Activated CD4-positive, alpha-beta memory T cell treated with anti-CD3 and anti-CD28 coated beads for 36 hours (primary cell): ENCODE measurements at regions of chr9 and their contacts with region 1.

Region 1: DNA sequence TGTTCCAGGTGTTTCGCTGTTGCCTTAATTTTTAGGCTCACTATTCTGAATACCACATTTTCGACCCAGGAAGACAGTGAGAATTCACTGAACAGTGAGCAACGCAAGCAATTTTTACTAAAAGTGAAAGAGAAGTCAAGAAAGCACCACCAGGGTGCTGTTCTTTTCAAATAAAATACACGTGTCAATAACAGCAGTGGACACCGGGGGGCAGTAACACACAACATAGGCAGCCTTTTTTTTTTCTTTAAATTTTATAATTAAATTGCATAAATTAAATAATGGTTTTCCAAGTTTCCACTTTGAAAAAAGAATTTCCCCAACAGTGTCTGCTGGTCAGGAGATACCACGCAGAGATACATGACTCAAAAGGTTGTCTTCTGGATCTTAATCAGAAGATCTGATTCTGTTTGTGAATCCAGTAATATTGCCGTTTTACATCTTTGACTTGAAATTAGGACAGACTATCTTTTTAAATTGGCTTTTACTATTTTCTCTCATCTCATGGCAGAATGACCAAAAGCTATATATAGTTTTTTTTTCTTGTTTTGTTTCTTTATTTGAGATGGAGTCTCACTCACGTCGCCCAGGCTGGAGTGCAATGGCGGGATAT is 47.1 kb upstream of the SH3GL2 start:
- DNase-seq: peak; percentile 17
- H3K4me3 Mint-ChIP-seq: no peak overlapping the region
- H3K27ac Mint-ChIP-seq: no peak overlapping the region
- H3K4me1 Mint-ChIP-seq: no peaks in the 10 kb centered on the region
- H3K27me3 Mint-ChIP-seq: no peaks in the 10 kb centered on the region

Region 2: GRCh38 chr9:18208154-18209059 is 676.7 kb after region 1 on chr9:
- CTCF ChIA-PET with region 1: no interaction called
- POLR2A ChIA-PET with region 1: no interaction called
- intact Hi-C with region 1: loop called (anchors 5 kb)
- DNase-seq: no peak
- H3K4me3 Mint-ChIP-seq: no peak overlapping the region
- H3K27ac Mint-ChIP-seq: no peak overlapping the region
- H3K4me1 Mint-ChIP-seq: no peaks in the 10 kb centered on the region
- H3K27me3 Mint-ChIP-seq: peaks cover 2% of the 10 kb centered on the region